A673 (cell line): ENCODE measurements at regions of chr14 and their contacts with region 1.

Region 1: DNA sequence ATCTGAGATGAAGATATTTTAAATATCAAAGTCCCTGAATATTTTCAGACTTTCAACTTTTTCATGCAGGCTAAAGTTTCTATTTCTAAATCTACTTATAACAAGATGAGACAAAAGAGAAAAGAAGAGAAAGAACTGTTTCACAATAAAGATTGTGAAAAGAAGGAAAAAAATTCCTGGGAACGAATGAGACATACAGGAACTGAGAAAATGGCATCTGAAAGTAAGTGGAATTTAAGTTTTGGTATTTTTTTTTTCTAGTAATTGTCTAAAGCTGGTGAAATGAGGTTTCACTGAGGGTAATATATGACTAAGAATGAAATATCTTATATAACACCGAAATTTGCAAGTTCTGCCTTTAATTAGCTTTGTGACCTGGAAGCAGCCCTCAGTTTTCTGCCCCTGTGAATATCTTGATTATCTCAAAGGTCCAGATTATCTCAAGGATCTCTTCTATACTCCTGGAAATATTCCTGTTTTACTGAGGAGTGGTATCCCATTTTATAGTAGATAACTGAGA is 55.7 kb upstream of the PRPF39 start:
- DNase-seq: no peak
- H3K4me3 ChIP-seq: no peak overlapping the region
- H3K27ac ChIP-seq: no peak overlapping the region
- H3K4me1 ChIP-seq: no peaks in the 10 kb centered on the region
- H3K27me3 ChIP-seq: no peaks in the 10 kb centered on the region
- CTCF ChIP-seq: no peak

Region 2: DNA sequence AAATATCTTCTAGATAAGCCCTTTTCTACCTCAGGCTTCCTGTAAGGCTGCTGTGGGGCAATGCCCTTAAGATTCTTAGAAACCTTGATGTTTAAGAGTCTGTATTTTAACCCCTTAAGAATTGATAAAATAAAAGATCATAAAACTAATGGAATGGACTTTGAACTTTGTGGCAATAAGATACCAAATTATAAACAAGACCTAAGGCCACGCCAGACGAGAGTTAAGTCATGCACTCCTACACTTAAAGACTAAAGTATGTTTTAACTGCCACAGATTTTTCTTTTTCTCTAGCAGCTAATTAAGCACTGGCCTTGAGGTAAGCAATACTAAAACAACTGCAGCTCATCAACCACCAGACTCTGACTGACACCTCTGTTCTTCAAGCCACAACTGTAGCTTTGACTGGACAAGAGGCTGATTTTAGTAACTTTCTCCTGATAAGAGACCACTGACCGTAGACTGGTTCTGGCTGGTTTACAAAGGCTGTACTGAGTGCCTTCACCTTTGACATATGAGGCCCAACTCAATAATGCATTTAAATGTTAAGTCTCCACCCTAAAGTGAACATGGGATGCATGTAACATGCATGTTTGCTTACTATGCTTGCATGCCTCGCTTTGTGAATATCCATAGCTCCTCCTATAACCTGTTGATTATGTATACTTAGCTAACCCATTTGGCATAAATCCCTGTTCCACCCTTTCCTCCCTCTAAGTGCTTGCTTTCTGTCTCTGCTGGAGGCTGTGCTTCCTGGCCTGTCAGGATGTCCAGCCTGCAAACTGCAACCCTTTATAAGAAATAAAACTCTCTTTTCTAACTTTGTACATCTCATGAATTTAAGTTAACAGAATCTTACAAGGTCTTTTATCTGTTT is 138.3 kb before region 1 on chr14:
- CTCF ChIA-PET with region 1: no interaction called
- POLR2A ChIA-PET with region 1: no interaction called
- intact Hi-C with region 1: no loop called
- DNase-seq: no peak
- H3K4me3 ChIP-seq: no peak overlapping the region
- H3K27ac ChIP-seq: no peak overlapping the region
- H3K4me1 ChIP-seq: no peaks in the 10 kb centered on the region
- H3K27me3 ChIP-seq: no peaks in the 10 kb centered on the region
- CTCF ChIP-seq: no peak

Region 3: DNA sequence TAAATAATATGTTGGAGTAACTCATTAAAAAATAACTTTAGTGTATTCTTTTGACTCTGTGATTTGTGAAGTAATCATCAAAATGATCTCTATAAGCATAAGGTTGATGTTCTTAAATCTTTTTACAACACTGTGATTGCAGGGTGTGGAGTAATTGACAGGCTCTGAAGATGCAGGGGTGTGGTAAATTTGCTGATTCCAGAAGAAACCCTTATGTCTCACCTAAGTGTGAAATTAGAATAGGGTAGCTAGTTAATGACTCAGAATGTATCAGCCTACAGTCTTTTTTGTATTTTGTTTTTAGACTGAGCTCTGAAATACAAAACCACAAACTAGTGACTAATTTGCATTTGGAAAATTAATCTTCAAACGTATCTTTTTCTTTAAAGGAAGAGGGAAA is 61.6 kb after region 1 on chr14:
- CTCF ChIA-PET with region 1: no interaction called
- POLR2A ChIA-PET with region 1: interaction called, 13 read pairs
- intact Hi-C with region 1: no loop called
- DNase-seq: no peak
- H3K4me3 ChIP-seq: no peak overlapping the region
- H3K27ac ChIP-seq: no peak overlapping the region
- H3K4me1 ChIP-seq: peaks cover 18% of the 10 kb centered on the region
- H3K27me3 ChIP-seq: no peaks in the 10 kb centered on the region
- CTCF ChIP-seq: no peak